Right ventricle myocardium inferior (tissue), 1 donor: ENCODE measurements at regions of chr10 and their contacts with region 1.

Region 1: DNA sequence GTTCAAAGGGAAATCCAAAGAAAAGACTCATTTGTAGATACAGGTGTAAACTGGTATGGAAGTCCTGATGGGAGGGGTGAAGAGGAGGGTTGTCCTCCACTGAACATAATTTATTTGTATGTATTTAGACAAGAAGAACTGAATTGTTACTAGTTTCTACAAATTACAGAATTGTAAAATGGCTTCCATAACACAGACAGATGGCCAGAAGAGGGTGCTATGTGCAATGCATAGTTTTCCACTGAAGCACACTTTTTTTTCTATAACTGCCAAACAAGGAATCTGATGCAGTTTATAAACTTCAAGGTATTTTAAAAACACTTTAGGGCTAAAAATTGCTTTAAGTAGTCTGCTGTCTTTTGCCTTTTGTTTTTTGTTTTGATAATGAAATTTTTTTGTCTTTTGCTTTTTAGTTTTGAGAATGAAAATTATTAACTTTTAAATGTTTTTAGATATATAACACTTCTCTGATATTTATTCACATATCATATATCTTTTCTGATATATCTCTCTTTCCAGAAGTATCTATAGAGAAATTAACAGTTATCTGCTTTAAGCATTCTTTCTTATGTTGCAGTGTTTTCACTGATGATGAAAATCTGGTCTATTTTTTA is 58.5 kb downstream of the PHYHIPL start:
- DNase-seq: no peak
- ATAC-seq: no peak

Region 2: DNA sequence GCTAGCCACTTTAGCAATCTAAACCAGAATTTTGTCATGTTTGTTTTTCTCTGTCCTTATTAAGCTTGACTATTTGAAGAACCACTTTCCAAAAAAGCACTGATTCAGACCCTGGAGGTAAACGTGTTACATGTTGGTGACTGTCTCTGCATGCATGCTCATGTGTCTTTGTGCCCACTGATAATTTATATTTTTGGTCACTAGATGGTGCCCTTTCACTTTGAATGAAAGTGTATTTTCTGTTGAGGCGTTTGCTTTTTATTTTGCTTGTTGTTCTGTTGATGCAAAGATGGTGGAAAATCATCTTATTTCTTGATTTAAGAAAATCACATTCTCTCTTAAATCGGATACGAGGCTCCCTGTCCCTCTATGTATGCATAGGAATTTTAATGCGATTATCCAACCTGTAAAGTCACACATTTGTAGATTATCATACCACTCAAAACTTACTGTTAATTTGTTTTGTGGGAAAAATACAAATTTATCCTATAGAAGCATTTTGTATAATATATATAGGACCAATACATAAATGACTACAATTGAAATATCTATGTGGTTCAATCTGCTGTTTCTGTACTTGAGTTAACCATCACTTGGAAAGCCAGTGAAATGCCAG is 452.9 kb before region 1 on chr10:
- intact Hi-C with region 1: loop called (anchors 10 kb)
- DNase-seq: no peak
- ATAC-seq: no peak

Region 3: DNA sequence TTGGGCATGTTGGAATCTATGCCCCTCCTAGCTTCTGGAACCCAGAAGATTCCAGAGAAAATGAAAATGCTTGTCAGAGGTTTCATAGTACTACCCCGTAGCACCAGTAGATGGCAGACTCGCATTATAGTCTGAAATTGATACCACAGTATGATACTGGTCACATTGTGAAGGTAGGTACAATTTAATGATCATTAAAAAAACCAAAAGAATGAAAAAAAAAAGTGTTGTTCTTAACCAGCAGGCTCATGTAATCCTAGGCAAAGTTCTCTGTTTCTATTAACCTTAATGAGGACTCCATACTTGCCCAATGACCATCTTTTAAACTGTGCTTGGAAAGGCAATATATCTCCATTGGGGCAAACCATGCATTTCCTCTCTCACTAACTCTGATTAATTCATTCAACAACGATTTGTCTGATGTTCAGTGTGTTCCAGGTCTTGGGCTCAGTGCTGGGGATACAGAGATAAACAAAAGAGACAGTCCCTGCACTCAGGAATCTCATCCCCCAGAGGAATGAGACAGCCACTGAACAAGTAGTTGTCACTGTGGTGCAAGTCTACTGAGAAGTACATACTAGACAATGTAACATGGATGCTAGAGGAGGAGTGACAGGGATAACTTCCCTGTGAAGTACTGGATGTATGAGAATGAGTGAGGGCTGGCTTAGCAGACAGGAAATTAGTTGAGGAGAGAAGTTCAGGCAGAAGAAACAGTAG is 282.0 kb before region 1 on chr10:
- intact Hi-C with region 1: loop called (anchors 2 kb)
- DNase-seq: no peak
- ATAC-seq: peak; percentile 72

Region 4: DNA sequence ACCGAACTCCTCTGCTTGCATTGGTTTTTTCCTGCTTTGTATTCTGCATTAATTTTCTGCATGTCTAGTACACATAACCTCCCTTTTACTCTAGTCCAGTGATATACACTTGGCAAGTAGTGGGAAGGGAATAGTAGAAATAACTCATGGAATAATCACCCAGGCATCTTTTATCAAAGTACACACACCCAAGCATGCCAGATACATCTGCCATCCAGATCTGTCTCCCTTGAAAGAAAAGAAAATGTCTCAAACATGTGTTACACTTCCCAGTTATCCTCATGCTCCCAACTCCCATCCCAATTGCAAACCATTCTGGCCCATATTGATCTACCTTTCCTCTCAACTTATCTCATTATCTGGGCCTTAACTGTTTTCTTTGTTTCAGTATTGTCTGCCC is 20.5 kb after region 1 on chr10:
- intact Hi-C with region 1: no loop called
- DNase-seq: no peak
- ATAC-seq: no peak

Region 5: GRCh38 chr10:59830601-59831259 is 595.8 kb after region 1 on chr10:
- intact Hi-C with region 1: loop called (anchors 10 kb)
- DNase-seq: no peak
- ATAC-seq: peak; percentile 41